Transverse colon (tissue), 4 donors: ENCODE measurements at regions of chr10 and their contacts with region 1.

Region 1: DNA sequence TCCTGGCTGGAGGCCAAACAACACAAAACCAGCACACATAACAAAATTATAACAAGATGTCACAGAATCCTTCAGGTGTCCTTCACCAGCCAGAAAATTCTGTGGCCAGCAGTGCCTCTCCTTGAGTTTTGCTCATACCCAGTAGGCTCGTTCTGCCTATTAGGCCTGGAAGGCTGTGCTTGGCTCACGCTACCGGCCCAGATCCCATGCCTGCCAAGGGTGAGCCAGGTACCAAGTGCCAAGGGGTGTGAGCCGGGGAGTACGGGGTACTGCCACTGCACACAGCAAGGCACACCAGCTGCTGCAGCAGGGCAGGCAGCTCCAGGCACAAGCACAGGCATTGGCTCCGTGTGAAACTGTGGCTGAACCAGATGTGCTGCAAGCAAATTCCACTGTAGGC is 1562.0 kb downstream of the REEP3 start:
- DNase-seq: no peak
- H3K4me3 ChIP-seq: no peak overlapping the region
- H3K27ac ChIP-seq: no peak overlapping the region
- H3K4me1 ChIP-seq: no peaks in the 10 kb centered on the region
- H3K27me3 ChIP-seq: no peaks in the 10 kb centered on the region
- CTCF ChIP-seq: no peak
- EP300 ChIP-seq: no peak
- POLR2A ChIP-seq: no peak

Region 2: GRCh38 chr10:64508029-64508661 is 575.1 kb before region 1 on chr10:
- in situ Hi-C with region 1: no loop called
- intact Hi-C with region 1: loop called (anchors 5 kb)
- DNase-seq: no peak
- H3K4me3 ChIP-seq: no peak overlapping the region
- H3K27ac ChIP-seq: no peak overlapping the region
- H3K4me1 ChIP-seq: no peaks in the 10 kb centered on the region
- H3K27me3 ChIP-seq: no peaks in the 10 kb centered on the region
- CTCF ChIP-seq: no peak
- EP300 ChIP-seq: no peak
- POLR2A ChIP-seq: no peak